Activated CD4-positive, alpha-beta memory T cell treated with anti-CD3 and anti-CD28 coated beads for 36 hours (primary cell): ENCODE measurements at regions of chr21 and their contacts with region 1.

Region 1: GRCh38 chr21:24514081-24514733 is 1093.1 kb downstream of the MRPL39 start:
- DNase-seq: no peak
- H3K4me3 Mint-ChIP-seq: no peak overlapping the region
- H3K27ac Mint-ChIP-seq: no peak overlapping the region
- H3K4me1 Mint-ChIP-seq: no peaks in the 10 kb centered on the region
- H3K27me3 Mint-ChIP-seq: no peaks in the 10 kb centered on the region

Region 2: DNA sequence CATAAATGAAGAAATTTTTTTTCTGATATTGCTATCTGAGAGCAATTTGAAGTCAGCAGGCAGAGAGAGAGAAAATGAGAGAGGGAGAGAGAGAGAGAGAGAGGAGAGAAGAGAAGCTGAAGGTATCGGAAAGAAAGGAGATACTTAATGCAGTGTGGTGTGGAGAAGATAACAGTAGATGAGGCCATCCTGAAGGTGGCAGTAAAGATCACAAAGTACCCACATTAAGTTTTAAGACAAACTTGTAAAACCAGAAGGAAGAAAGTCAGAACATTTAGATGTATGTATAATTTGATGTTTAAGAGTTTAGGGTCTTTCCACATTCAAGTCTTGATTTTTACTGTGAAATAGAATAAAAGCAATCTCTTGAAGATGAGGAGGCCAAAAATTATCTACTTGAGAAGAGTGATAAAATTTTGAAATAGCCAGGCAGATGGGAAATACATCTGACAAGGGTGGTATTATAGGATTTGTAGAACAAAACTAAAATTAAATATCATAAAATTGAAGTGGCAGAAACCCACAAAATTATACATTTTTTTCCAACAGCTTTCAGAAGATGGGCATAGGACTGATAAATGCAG is 660.3 kb before region 1 on chr21:
- CTCF ChIA-PET with region 1: no interaction called
- POLR2A ChIA-PET with region 1: no interaction called
- intact Hi-C with region 1: loop called (anchors 10 kb)
- DNase-seq: no peak
- H3K4me3 Mint-ChIP-seq: no peak overlapping the region
- H3K27ac Mint-ChIP-seq: no peak overlapping the region
- H3K4me1 Mint-ChIP-seq: no peaks in the 10 kb centered on the region
- H3K27me3 Mint-ChIP-seq: no peaks in the 10 kb centered on the region

Region 3: GRCh38 chr21:24649691-24650090 is 135.5 kb after region 1 on chr21:
- CTCF ChIA-PET with region 1: no interaction called
- POLR2A ChIA-PET with region 1: no interaction called
- intact Hi-C with region 1: no loop called
- DNase-seq: no peak
- H3K4me3 Mint-ChIP-seq: no peak overlapping the region
- H3K27ac Mint-ChIP-seq: no peak overlapping the region
- H3K4me1 Mint-ChIP-seq: no peaks in the 10 kb centered on the region
- H3K27me3 Mint-ChIP-seq: no peaks in the 10 kb centered on the region